Activated CD4-positive, alpha-beta T cell treated with anti-CD3 and anti-CD28 coated beads, Interleukin-2, amount 10 ng/mL, durations not matched to agents 7 days and 5 days (primary cell): ENCODE measurements at regions of chr2 and their contacts with region 1.

Region 1: DNA sequence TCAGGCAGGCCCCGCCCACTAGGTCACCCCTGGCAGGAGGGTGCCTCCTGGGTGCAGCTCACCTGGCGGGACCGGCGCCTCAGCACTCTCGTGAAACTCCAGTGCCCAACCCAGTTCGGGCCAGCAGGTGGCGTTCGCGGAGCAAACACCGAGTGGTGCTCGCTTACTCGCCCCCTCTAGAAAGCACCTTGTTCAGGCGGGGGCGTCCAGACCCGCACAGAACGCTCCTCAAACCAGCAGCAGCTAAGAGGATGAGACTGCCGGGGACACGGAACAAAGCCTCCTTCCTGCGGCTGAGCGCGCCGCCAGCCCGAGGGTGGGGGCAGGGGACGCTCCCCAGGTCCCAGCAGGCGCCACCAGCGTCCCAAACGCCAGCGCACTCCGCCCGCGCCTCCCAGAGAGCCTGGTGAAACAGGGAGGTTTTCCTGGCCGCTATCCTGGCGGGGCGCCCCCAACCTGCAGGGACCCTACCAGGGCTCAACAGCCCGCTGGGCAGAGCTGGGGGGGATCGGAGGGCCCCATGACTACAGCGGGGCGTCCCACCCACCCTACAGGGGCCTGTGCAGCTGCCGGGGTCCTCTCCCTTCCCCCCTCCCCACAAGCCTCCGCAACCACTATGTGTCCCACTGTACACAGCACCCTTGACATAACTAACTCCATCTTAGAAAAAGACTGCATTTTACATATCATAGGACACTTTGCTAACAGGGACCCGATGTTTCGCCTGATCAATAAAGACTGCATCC is 44.7 kb downstream of the MRPS5 start:
- DNase-seq: peak; percentile 94
- H3K4me3 Mint-ChIP-seq: peak overlapping the region; percentile 88
- H3K27ac Mint-ChIP-seq: peak overlapping the region; percentile 98
- H3K4me1 Mint-ChIP-seq: peaks cover 80% of the 10 kb centered on the region
- H3K27me3 Mint-ChIP-seq: no peaks in the 10 kb centered on the region

Region 2: DNA sequence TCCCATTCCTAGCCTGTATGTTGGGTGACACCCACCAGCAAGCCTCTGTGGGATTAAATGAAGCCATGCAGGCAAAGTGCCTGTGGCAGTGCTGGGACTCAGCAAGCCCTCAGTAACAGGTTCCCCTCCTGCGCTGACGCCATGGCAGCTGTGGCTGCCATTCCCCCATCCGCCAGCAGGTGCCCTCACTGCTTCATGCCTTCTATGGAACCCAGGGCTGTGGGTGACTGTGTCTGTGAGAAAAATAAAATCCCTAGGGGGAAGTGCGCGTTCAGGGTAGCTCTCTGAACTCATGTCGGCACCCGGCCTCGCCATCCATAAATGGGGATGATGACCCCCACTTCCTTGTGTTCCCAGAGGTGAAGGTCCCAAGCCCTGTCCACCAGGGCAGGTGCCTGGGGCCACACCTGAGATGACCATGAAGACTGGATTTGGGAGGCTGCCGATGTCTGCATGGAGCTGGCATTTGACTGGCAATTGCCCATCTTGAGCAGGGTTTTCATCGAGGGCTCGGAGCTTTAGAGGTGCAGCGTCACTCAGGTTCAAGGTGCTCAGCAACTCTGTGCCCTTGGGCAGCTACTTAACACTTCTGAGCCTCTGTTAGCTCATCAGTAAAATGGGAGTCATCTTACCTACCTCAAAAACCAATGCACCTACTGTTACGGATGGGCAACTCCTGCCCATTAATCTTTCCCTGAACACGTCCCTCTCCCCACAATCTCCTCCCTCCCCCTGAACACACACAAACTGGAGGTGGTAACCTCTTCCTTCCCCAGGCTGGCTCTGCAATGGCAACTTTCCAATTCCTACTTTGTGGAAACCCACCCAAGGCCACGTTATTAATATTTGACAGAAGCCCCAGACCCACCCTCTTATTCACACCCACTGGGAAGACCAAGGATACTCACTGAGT is 54.4 kb before region 1 on chr2:
- CTCF ChIA-PET with region 1: interaction called, 149 read pairs
- POLR2A ChIA-PET with region 1: interaction called, 5 read pairs
- DNase-seq: peak; percentile 88
- H3K4me3 Mint-ChIP-seq: peak overlapping the region; percentile 80
- H3K27ac Mint-ChIP-seq: peak overlapping the region; percentile 79
- H3K4me1 Mint-ChIP-seq: peaks cover 47% of the 10 kb centered on the region
- H3K27me3 Mint-ChIP-seq: no peaks in the 10 kb centered on the region

Region 3: GRCh38 chr2:95043300-95044093 is 33.5 kb before region 1 on chr2:
- CTCF ChIA-PET with region 1: interaction called, 16 read pairs
- POLR2A ChIA-PET with region 1: no interaction called
- DNase-seq: no peak
- H3K4me3 Mint-ChIP-seq: no peak overlapping the region
- H3K27ac Mint-ChIP-seq: peak overlapping the region; percentile 38
- H3K4me1 Mint-ChIP-seq: peaks cover 70% of the 10 kb centered on the region
- H3K27me3 Mint-ChIP-seq: no peaks in the 10 kb centered on the region

Region 4: DNA sequence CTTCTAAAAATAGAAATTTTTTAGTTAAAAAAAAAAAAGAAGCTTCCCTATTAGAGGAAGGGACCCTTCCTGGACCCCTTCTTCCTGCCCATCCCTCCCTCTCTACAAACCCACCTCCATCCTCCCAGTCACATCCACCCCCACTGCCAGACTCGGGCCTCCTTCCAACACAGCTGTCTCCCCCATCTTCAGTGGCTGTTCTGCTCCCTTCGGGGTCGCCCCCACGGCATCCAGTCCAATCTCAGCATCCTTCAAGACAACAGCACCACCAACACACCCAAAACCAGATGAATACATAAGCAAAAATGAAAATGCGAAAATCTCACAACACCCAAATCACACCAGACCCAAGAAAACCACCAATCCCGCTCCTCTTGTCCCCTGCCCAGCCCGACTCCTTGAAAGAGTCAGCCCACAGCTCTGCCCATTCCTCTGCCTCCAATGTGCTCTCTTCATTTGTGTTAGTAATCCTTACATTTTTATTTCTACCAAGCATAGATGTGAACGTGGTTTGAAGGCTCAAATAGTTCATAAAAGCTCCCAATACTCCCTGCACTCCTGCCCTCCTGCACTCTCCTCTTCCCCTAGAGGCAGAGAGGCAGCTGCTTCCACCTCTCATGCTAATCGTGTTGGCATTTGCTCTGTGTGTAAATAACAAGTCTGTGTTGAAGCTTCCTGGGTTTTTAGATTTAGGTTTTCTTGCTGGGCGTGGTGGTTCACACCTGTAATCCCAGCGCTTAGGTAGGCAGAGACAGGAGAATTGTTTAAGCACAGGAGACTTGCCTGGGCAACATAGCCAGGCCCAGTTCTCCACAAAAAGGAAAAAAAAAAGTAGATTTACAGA is 14.5 kb before region 1 on chr2:
- CTCF ChIA-PET with region 1: interaction called, 92 read pairs
- POLR2A ChIA-PET with region 1: interaction called, 7 read pairs
- DNase-seq: no peak
- H3K4me3 Mint-ChIP-seq: peak overlapping the region; percentile 42
- H3K27ac Mint-ChIP-seq: peak overlapping the region; percentile 91
- H3K4me1 Mint-ChIP-seq: peaks cover 42% of the 10 kb centered on the region
- H3K27me3 Mint-ChIP-seq: no peaks in the 10 kb centered on the region

Region 5: DNA sequence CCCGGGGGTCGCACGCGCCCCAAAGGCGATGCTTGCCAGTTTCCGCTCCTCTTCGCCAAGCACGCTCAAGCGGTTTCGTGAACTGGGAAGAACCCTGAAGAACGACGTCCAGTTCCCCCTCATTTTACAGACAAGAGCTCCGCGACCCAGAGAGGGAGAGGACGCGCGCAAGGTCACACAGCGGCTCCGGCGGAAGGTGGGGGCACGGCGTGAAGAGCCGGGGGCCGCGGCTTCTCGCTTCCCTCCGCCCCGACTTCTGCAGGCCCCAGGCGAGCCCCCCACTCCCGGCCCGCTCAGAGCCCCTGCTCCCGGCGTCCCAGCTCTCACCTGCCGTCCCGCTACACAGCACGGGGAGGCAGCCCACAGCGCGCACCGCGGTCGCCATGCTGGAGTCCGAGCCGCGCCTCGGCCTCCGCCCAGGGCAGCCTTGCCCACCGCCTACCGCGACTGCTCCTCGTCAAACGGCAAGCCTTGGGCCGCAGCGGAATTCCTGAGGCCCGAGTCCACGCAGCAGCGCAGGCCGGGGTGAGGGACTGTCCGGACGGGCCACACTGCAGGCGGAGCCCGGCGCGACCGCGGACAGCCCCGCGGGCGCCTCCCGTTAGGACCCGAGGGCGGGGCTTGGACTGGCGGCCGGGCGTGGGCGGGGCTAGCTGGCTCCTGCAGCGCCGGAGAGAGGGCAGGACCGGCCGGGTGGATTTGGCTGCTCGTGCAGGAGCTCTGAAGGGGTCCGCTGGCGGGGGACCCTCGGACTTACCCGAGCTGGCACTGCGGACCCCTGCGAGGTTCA is 44.6 kb after region 1 on chr2 and contains the start of gene MRPS5:
- CTCF ChIA-PET with region 1: interaction called, 58 read pairs
- POLR2A ChIA-PET with region 1: no interaction called
- DNase-seq: peak; percentile 85
- H3K4me3 Mint-ChIP-seq: peak within 1 kb of the TSS; percentile 87
- H3K27ac Mint-ChIP-seq: peak within 1 kb of the TSS; percentile 96
- H3K4me1 Mint-ChIP-seq: peaks cover 40% of the 10 kb centered on the region
- H3K27me3 Mint-ChIP-seq: no peaks in the 10 kb centered on the region
- total RNA-seq, gene MRPS5: 70.3 to 71.7 TPM